Activated B cell treated with CpG ODN at 0.5 μM for 24 hours (primary cell): ENCODE measurements at regions of chr2 and their contacts with region 1.

Region 1: GRCh38 chr2:183543731-183544130 is 419.5 kb downstream of the NUP35 start:
- DNase-seq: no peak
- ATAC-seq: peak; percentile 66
- H3K4me3 Mint-ChIP-seq: no peak overlapping the region
- H3K27ac Mint-ChIP-seq: no peak overlapping the region
- H3K4me1 Mint-ChIP-seq: peaks cover 7% of the 10 kb centered on the region
- H3K27me3 Mint-ChIP-seq: no peaks in the 10 kb centered on the region
- CTCF ChIP-seq: no peak

Region 2: GRCh38 chr2:183505911-183506310 is 37.8 kb before region 1 on chr2:
- CTCF ChIA-PET with region 1: no interaction called
- POLR2A ChIA-PET with region 1: no interaction called
- intact Hi-C with region 1: loop called (anchors 2 kb)
- DNase-seq: no peak
- ATAC-seq: peak; percentile 42
- H3K4me3 Mint-ChIP-seq: no peak overlapping the region
- H3K27ac Mint-ChIP-seq: no peak overlapping the region
- H3K4me1 Mint-ChIP-seq: peaks cover 5% of the 10 kb centered on the region
- H3K27me3 Mint-ChIP-seq: no peaks in the 10 kb centered on the region
- CTCF ChIP-seq: no peak